PC-3 (cell line): ENCODE measurements at regions of chr1 and their contacts with region 1.

Region 1: DNA sequence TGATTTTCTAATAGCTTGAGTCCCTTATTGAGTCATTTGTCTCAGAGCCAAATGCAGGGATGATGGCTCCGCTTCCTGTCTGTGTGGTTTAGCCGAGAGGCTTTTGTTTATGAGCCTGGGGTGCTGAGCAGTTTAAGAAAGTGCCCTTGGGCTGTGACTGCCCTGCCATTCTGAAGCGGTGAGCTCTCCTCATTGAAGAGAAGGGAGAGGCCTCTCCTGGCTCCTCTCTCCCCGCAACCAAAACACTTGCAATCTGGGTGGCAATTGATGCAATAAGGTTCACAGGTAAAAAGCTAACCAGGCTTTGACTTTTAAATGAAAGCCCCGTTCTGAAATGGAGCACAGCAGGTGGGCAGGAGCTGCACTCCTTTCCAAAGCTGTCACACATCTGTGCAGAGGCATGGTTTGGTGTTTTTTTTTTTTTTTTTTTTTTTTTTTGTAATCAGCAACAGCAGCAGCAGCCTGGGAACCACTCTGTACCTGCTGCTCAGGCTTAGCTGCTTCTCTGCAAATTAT is 403.7 kb downstream of the SIPA1L2 start:
- DNase-seq: peak; percentile 97
- ATAC-seq: peak; percentile 64
- H3K4me3 ChIP-seq: peak overlapping the region; percentile 25; the same call in 1 of the 2 replicates
- H3K27ac ChIP-seq: peak overlapping the region; percentile 62
- H3K4me1 ChIP-seq: peaks cover 50% of the 10 kb centered on the region
- H3K27me3 ChIP-seq: no peaks in the 10 kb centered on the region
- CTCF ChIP-seq: no peak

Region 2: DNA sequence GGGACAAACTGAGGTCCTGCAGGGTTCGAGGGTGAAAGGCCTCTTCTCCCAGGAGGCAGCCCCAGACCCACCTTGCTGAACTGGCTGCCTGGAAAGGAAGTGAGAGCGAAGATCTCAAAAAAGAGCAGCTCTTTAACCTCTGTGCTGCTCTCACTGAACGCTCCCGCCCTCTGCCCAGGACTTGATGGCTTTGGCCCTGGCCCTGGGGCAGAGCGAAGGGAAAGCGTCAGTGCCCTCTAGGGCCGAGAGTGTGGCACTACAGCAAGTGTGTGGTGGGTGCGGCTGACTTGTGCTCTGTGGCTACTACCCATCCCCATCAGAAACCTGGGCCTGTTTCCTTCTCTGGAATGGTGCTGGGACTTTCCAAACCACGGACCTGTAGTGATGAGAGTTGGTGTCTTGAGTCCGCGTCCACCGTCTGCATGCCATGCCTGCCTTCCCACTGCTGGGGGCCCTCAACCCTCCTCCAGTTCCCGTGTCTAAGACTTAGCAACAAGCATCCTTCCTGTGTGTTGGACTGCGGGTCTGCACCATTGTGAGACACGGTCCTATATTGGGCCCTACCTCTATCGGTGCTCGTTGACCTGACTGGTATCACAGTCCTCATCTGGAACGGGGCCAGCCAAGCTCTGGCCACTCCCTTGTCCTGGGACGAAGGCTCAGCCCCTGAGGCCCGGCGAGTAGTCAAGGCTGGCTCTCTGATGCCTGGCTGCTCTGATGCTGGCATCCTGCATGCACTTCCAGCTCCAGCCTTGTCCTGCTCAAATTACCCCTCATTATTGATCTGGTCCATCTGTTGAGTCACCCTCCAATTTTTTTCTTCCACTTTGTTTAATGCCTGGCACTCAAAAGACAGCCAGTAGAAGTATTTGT is 419.4 kb before region 1 on chr1:
- CTCF ChIA-PET with region 1: interaction called, 15 read pairs
- POLR2A ChIA-PET with region 1: no interaction called
- intact Hi-C with region 1: no loop called
- DNase-seq: peak; percentile 78
- ATAC-seq: peak; percentile 53
- H3K4me3 ChIP-seq: no peak overlapping the region
- H3K27ac ChIP-seq: no peak overlapping the region
- H3K4me1 ChIP-seq: peaks cover 19% of the 10 kb centered on the region
- H3K27me3 ChIP-seq: no peaks in the 10 kb centered on the region
- CTCF ChIP-seq: peak; percentile 79

Region 3: DNA sequence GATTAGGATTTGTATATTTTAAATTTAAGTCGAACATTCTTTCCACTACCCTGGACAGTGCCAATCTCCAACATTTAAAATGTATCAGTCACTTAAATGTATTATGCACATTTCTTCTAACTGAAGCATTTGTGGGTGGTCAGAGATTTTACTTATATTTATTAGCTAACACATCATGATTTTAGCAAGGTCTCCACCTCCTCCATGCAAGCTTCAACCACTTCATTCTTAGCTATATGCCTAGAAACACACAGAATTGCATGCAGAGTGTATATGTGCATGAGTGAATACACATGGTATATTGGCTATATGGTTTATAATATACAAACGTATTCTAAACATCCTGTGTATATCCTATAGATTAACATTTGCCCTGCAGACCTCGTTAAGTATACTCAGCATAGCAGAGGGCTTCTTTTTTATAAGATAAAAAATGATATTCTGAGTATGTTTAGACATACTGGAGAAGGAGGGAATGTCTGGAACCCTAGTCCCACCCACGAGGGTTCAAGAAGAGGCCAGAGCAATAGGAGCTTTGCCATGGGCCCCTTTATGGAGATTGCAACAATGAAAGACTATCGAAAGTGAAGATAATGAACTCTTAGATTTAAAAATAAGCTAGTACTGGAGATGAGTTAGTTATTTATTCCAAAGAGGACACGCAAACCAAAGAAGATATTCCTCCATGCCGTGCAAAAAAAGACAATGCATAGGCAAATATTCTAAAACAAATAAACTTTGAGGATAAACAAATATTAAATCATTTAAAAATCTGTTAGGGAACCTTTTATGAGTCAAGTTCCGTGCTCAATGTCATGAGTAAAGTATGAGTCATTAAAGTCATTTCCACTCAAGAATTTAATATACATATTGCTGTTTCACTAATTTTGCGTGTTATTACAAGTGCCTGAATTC is 76.7 kb before region 1 on chr1:
- CTCF ChIA-PET with region 1: no interaction called
- POLR2A ChIA-PET with region 1: no interaction called
- intact Hi-C with region 1: loop called (anchors 1 kb)
- DNase-seq: peak; percentile 90
- ATAC-seq: peak; percentile 80
- H3K4me3 ChIP-seq: peak overlapping the region; percentile 31
- H3K27ac ChIP-seq: peak overlapping the region; percentile 95
- H3K4me1 ChIP-seq: peaks cover 28% of the 10 kb centered on the region
- H3K27me3 ChIP-seq: no peaks in the 10 kb centered on the region
- CTCF ChIP-seq: no peak

Region 4: GRCh38 chr1:232174306-232174705 is 51.9 kb before region 1 on chr1:
- CTCF ChIA-PET with region 1: no interaction called
- POLR2A ChIA-PET with region 1: interaction called, 27 read pairs
- intact Hi-C with region 1: no loop called
- DNase-seq: no peak
- ATAC-seq: no peak
- H3K4me3 ChIP-seq: no peak overlapping the region
- H3K27ac ChIP-seq: no peak overlapping the region
- H3K4me1 ChIP-seq: no peaks in the 10 kb centered on the region
- H3K27me3 ChIP-seq: no peaks in the 10 kb centered on the region
- CTCF ChIP-seq: no peak